ENCODE measurements at regions of chr10 and their contacts with region 1.

Region 1: GRCh38 chr10:102342958-102343357 is 52.5 kb upstream of the NFKB2 start:
- DNase-seq: peak; percentile 69
- ATAC-seq: peak; percentile 84
- H3K4me3 ChIP-seq: no peak overlapping the region
- H3K27ac ChIP-seq: peak overlapping the region; percentile 76
- H3K4me1 ChIP-seq: peaks cover 25% of the 10 kb centered on the region
- H3K27me3 ChIP-seq: no peaks in the 10 kb centered on the region
- CTCF ChIP-seq: no peak

Region 2: DNA sequence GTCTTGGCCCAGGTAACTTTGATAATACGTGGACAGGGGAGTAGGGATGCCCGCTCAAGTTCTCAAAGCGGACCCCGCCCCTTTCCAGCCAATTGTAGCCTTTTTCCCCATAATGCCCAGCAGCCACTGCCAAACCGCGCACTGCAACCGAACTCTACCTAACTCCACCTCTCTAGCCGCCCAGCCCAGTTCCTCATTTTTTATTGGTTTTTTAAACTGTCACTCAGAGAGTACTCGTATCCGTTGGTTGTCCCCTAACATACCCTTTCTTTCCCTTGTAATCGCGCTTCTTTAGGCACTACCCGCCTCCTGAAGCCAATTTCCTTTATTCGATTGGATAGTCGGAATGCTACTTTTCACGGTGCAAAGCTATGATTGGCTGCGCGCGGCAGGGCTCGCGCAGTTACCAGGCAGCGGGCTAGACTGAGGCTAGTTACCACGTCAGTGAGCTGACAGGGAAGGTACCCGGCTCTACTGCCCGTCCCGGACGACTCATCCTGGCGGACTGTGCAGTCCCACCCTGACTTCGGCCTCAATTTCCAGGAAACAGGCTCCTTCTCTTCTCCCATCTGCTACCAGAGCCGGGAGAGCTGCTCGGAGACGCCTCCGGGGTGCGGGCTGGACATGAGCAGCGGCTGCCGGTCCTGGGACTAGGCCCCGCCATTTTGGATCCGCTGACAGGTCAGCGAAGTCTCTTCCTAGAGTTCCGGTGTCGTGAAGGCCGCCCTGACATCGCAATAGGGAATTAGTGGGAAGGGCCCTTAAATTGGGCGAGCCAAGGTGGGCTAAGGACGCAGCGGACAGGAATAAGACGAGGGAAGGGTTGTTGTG is 97.6 kb before region 1 on chr10 and contains the start of gene GBF1:
- CTCF ChIA-PET with region 1: no interaction called
- POLR2A ChIA-PET with region 1: no interaction called
- intact Hi-C with region 1: loop called (anchors 5 kb)
- DNase-seq: peak; percentile 99
- ATAC-seq: peak; percentile 92
- H3K4me3 ChIP-seq: peak within 1 kb of the TSS; percentile 90
- H3K27ac ChIP-seq: peak within 1 kb of the TSS; percentile 52
- H3K4me1 ChIP-seq: peaks cover 33% of the 10 kb centered on the region
- H3K27me3 ChIP-seq: no peaks in the 10 kb centered on the region
- CTCF ChIP-seq: no peak
- total RNA-seq, gene GBF1: 25.2 and 31.3 TPM in 2 replicates

Region 3: GRCh38 chr10:102300278-102300843 is 42.6 kb before region 1 on chr10:
- CTCF ChIA-PET with region 1: no interaction called
- POLR2A ChIA-PET with region 1: no interaction called
- intact Hi-C with region 1: loop called (anchors 5 kb)
- DNase-seq: peak; percentile 18
- ATAC-seq: peak; percentile 22; the same call in 1 of the 2 replicates
- H3K4me3 ChIP-seq: no peak overlapping the region
- H3K27ac ChIP-seq: peak overlapping the region; percentile 57
- H3K4me1 ChIP-seq: peaks cover 8% of the 10 kb centered on the region; the same call in 1 of the 2 replicates
- H3K27me3 ChIP-seq: no peaks in the 10 kb centered on the region
- CTCF ChIP-seq: no peak

Measured in PC-3 (cell line).